Prostate gland (tissue), 2 donors: ENCODE measurements at regions of chr17 and their contacts with region 1.

Region 1: GRCh38 chr17:31570951-31571892 is 179.7 kb downstream of the RAB11FIP4 start:
- DNase-seq: peak; percentile 42
- H3K4me3 ChIP-seq: no peak overlapping the region
- H3K27ac ChIP-seq: peak overlapping the region; percentile 50 to 66
- H3K4me1 ChIP-seq: peaks cover 7% of the 10 kb centered on the region
- H3K27me3 ChIP-seq: no peaks in the 10 kb centered on the region
- CTCF ChIP-seq: no peak
- POLR2A ChIP-seq: no peak

Region 2: DNA sequence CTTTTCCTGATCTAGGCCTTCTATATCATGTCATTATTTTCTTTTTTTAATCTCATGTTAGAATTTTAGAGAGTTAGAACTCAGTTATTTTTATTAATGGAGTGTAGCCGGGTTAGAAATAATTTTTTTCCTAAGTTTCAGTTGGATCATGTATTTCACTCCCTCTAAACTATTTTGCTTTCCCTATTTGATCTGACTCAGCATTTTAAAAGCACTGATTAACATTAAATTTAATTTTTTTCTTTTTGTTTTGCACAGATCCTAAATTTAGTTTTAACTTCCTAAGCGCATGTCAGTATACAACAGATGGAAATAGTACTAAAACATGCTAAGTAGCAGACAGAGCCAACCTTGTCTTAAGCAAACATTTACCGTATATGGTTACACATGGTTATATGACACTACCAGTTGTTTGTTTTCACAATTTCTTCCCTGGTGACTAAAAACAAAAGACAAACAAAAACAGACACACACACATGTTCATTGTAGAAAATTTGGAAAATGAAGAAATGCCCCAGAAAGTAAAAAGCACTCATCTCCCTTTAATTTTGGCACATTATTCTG is 213.3 kb before region 1 on chr17:
- intact Hi-C with region 1: no loop called
- DNase-seq: no peak
- H3K4me3 ChIP-seq: no peak overlapping the region
- H3K27ac ChIP-seq: no peak overlapping the region
- H3K4me1 ChIP-seq: no peaks in the 10 kb centered on the region
- H3K27me3 ChIP-seq: no peaks in the 10 kb centered on the region
- CTCF ChIP-seq: no peak
- POLR2A ChIP-seq: no peak

Region 3: GRCh38 chr17:31696184-31696602 is 125.0 kb after region 1 on chr17:
- intact Hi-C with region 1: loop called (anchors 5 kb)
- DNase-seq: peak; percentile 89
- H3K4me3 ChIP-seq: no peak overlapping the region
- H3K27ac ChIP-seq: peak overlapping the region; percentile 43
- H3K4me1 ChIP-seq: peaks cover 7% of the 10 kb centered on the region
- H3K27me3 ChIP-seq: no peaks in the 10 kb centered on the region
- CTCF ChIP-seq: no peak
- POLR2A ChIP-seq: no peak